Endothelial cell of umbilical vein (primary cell): ENCODE measurements at regions of chr18 and their contacts with region 1.

Region 1: GRCh38 chr18:12038639-12039417 is 54.8 kb upstream of the ANKRD62 start:
- DNase-seq: peak; percentile 70
- H3K4me3 ChIP-seq: peak overlapping the region in 2 of 3 experiments; percentile 52 to 57
- H3K27ac ChIP-seq: no peak overlapping the region
- H3K4me1 ChIP-seq: peaks cover 2% of the 10 kb centered on the region
- H3K27me3 ChIP-seq: peaks cover 5 to 7% of the 10 kb centered on the region in 2 experiments
- CTCF ChIP-seq: peak; percentile 97 to 99
- POLR2A ChIP-seq: no peak

Region 2: GRCh38 chr18:11654736-11655605 is 383.9 kb before region 1 on chr18:
- CTCF ChIA-PET with region 1: interaction called, 50 read pairs
- POLR2A ChIA-PET with region 1: no interaction called
- dilution Hi-C with region 1: no loop called
- intact Hi-C with region 1: loop called (anchors 1 kb)
- DNase-seq: peak; percentile 32
- H3K4me3 ChIP-seq: no peak overlapping the region
- H3K27ac ChIP-seq: no peak overlapping the region
- H3K4me1 ChIP-seq: no peaks in the 10 kb centered on the region
- H3K27me3 ChIP-seq: peaks cover 0 to 2% of the 10 kb centered on the region in 2 experiments
- CTCF ChIP-seq: peak; percentile 80 to 84
- POLR2A ChIP-seq: no peak

Region 3: DNA sequence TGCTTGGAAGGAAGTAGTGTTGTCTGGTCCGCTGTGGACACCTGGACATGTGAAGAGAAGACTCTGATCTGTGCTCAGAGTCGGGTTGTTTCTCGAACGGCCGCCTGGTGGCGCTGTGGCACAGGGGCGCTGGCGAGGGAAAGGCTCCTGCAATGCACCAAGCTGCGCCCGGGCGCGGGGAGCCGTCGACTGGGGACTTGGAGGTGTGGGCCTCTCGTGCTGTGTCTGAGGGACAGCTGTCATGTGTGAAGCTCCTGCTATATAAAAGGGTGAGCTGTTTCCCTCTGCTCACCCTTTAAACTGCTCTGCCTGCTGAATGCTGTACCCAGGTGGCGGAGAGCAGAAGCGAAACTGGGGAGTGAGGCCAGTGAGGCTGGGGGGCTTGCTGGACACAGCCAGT is 305.8 kb before region 1 on chr18:
- CTCF ChIA-PET with region 1: interaction called, 42 read pairs
- POLR2A ChIA-PET with region 1: no interaction called
- dilution Hi-C with region 1: no loop called
- intact Hi-C with region 1: loop called (anchors 1 kb)
- DNase-seq: peak; percentile 60
- H3K4me3 ChIP-seq: no peak overlapping the region
- H3K27ac ChIP-seq: no peak overlapping the region
- H3K4me1 ChIP-seq: no peaks in the 10 kb centered on the region
- H3K27me3 ChIP-seq: peaks cover 0 to 2% of the 10 kb centered on the region in 2 experiments
- CTCF ChIP-seq: peak; percentile 86 to 96
- POLR2A ChIP-seq: no peak

Region 4: GRCh38 chr18:11932393-11932792 is 106.4 kb before region 1 on chr18:
- CTCF ChIA-PET with region 1: interaction called, 159 read pairs
- POLR2A ChIA-PET with region 1: no interaction called
- dilution Hi-C with region 1: no loop called
- intact Hi-C with region 1: no loop called
- DNase-seq: no peak
- H3K4me3 ChIP-seq: no peak overlapping the region
- H3K27ac ChIP-seq: no peak overlapping the region
- H3K4me1 ChIP-seq: no peaks in the 10 kb centered on the region
- H3K27me3 ChIP-seq: peaks cover 0 to 2% of the 10 kb centered on the region in 2 experiments
- CTCF ChIP-seq: no peak
- POLR2A ChIP-seq: no peak

Region 5: DNA sequence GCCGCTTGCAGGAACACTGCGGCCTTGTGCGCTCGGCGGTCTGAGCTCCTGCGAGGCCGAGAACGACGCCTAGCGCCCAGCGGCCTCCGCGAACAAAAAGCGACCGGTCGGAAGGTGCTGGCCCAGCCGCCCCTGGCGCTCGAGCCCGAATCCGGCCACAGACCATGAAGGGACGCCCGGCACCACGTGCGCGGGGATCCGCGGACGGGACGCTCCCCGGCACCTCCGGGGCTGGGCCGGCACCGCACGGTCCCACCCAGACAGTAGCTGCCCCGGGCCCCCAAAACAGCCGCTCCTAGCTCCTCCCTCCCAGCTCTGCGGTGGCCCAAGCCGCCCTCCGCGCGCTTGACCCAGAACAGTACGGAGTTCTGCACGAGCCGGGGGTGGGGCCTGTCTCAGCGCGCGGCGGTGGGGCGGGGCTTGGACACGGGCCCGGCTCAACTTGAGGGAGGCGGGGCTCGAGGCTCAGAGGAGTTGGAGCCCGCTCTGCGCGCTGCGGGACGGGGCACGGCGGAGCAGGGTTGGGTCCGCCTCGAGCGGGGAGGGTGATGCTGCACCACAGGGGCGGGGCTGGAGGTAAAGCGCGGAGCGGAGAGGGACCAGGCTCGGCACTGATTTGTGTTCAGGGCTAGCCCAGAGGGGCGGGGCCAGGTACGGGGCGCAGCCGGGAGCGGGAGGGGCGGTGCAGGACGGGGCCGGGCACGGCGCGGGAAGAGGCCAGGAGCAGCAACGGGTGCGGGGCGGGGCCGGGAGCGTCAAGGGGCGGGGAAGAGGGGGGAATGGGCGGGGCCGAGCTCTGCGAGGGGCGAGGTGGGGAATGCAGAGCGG is 58.1 kb before region 1 on chr18:
- CTCF ChIA-PET with region 1: interaction called, 12 read pairs
- POLR2A ChIA-PET with region 1: no interaction called
- dilution Hi-C with region 1: no loop called
- intact Hi-C with region 1: loop called (anchors 5 kb)
- DNase-seq: peak; percentile 98
- H3K4me3 ChIP-seq: peak overlapping the region; percentile 43 to 86 (median 72)
- H3K27ac ChIP-seq: peak overlapping the region; percentile 71
- H3K4me1 ChIP-seq: peaks cover 12% of the 10 kb centered on the region
- H3K27me3 ChIP-seq: peaks cover 3 to 4% of the 10 kb centered on the region in 2 experiments
- CTCF ChIP-seq: peak in 1 of 2 donors; percentile 19
- POLR2A ChIP-seq: peak; percentile 61